ENCODE measurements at regions of chr2 and their contacts with region 1.

Region 1: DNA sequence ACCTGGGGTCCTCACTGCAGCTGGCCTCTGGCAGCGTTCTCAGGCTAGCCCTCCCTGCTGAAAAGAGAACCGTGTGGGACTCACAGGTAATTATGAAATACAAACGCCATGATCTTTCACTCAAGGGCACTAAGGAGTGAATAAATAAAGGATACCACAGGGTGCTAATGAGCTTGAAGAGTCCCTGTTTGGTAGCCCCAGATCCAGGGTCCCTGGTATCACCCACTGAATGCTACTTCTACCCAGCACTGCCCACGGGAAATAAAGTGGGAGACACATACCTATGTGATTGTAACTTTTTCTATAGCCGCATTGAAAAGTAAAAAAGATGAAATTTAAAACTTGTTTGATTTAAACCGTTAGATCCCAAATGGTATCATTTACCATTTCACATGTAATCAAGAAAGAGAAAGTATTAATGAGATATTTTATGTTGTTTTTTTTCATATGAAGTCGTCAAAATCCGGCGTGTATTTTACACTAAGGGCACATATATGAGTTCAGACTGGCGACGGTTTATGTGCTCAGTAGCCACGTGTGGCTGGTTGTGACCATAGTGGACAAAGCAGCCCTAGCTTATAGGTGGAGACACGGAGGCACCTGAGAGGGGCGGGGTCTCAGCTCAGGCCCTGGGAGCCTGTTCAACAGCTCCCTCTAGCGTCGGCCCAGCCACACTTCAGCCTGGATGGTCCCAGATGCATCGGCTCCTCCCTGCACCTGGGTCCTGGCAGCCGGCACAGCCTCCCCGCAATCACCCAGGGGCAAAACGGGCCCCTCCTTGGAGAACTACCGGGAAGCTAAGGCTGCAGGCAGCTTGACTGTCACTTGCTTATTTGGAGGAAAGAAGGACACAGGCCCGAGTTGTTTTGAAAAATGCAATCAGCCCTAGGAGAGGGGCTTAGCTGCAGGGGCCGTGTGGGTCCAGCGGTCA is 39.2 kb downstream of the ODC1 start:
- DNase-seq: peak; percentile 93 to 94
- ATAC-seq: peak; percentile 58 to 80
- H3K4me3 ChIP-seq: peak overlapping the region; percentile 13; the same call in 2 of the 3 replicates
- H3K27ac ChIP-seq: peak overlapping the region; percentile 93 to 95
- H3K4me1 ChIP-seq: peaks cover 63% of the 10 kb centered on the region
- CTCF ChIP-seq: peak; percentile 99
- EP300 ChIP-seq: no peak; a peak in 1 of 5 replicates
- POLR2A ChIP-seq: no peak
- RAD21 ChIP-seq: peak; percentile 99

Region 2: DNA sequence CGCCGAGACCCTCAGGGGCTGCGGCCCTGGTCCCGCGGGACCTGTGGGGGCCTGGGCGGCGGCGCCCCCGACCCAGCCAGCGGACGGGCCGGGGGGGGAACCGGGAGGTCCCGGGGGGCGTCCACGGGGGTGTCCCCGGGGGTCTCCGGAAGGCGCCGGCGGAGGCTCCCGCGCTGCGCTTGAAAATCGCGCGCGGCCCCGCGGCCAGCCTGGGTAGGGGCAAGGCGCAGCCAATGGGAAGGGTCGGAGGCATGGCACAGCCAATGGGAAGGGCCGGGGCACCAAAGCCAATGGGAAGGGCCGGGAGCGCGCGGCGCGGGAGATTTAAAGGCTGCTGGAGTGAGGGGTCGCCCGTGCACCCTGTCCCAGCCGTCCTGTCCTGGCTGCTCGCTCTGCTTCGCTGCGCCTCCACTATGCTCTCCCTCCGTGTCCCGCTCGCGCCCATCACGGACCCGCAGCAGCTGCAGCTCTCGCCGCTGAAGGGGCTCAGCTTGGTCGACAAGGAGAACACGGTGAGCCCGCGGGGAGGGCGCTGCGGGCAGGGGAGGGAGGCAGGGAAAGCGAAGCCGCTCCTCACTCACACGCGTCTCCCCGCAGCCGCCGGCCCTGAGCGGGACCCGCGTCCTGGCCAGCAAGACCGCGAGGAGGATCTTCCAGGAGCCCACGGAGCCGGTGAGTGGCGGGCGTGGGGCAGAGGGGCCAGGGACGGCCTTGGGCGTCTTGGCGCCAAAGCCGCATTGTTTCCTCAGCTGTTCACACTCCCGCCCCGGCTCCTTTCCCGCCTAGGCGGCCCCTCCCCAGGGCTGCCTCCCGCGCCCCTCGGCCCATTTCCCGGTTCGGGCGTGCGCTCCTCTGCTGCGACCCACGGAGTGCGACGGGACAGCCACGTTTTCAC is 286.3 kb before region 1 on chr2 and contains the start of gene RRM2:
- CTCF ChIA-PET with region 1: interaction called, 374 read pairs
- POLR2A ChIA-PET with region 1: interaction called, 5 read pairs
- DNase-seq: peak; percentile 97
- ATAC-seq: peak; percentile 73 to 88
- H3K4me3 ChIP-seq: peak within 1 kb of the TSS; percentile 76
- H3K27ac ChIP-seq: peak within 1 kb of the TSS; percentile 88 to 95
- H3K4me1 ChIP-seq: peaks cover 30% of the 10 kb centered on the region
- CTCF ChIP-seq: no peak
- EP300 ChIP-seq: no peak
- POLR2A ChIP-seq: peak; percentile 91
- RAD21 ChIP-seq: no peak
- polyA plus RNA-seq, gene RRM2: 65.1 and 84.4 TPM in 2 replicates

Region 3: DNA sequence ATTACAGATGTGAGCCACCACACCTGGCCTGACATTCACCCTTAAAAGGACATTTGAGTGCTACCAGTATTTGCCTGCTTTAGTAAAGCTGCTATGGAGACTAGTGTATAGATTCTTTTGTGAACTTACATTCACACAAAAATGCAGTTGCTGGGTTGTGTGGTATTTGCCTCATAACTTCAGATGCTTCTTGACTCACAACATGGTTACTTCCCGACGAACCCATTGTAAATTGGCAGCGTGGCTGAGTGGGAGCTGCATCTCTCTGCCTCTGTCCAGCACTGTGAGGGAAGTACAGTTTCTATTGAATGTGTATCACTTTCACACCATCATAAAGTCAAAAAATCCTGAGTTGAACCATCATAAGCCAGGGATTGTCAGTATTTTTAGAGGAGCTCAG is 229.5 kb before region 1 on chr2:
- CTCF ChIA-PET with region 1: interaction called, 11 read pairs
- POLR2A ChIA-PET with region 1: no interaction called
- DNase-seq: no peak
- ATAC-seq: no peak
- H3K4me3 ChIP-seq: no peak overlapping the region
- H3K27ac ChIP-seq: no peak overlapping the region
- H3K4me1 ChIP-seq: no peaks in the 10 kb centered on the region
- CTCF ChIP-seq: no peak
- EP300 ChIP-seq: no peak
- POLR2A ChIP-seq: no peak
- RAD21 ChIP-seq: no peak

Region 4: GRCh38 chr2:10278029-10278762 is 130.7 kb before region 1 on chr2:
- CTCF ChIA-PET with region 1: interaction called, 86 read pairs
- POLR2A ChIA-PET with region 1: no interaction called
- DNase-seq: no peak
- ATAC-seq: peak in 1 of 2 experiments; percentile 48; a peak in 1 of 6 replicates
- H3K4me3 ChIP-seq: no peak overlapping the region
- H3K27ac ChIP-seq: peak overlapping the region; percentile 66 to 77; a peak in 5 of 6 replicates
- H3K4me1 ChIP-seq: peaks cover 25% of the 10 kb centered on the region
- CTCF ChIP-seq: no peak
- EP300 ChIP-seq: no peak
- POLR2A ChIP-seq: no peak
- RAD21 ChIP-seq: no peak

Region 5: GRCh38 chr2:10331027-10331701 is 77.8 kb before region 1 on chr2:
- CTCF ChIA-PET with region 1: interaction called, 61 read pairs
- POLR2A ChIA-PET with region 1: interaction called, 7 read pairs
- DNase-seq: peak; percentile 36 to 81
- ATAC-seq: peak; percentile 58 to 78
- H3K4me3 ChIP-seq: peak overlapping the region; percentile 25; the same call in 2 of the 3 replicates
- H3K27ac ChIP-seq: peak overlapping the region; percentile 89 to 92
- H3K4me1 ChIP-seq: peaks cover 84% of the 10 kb centered on the region
- CTCF ChIP-seq: no peak
- EP300 ChIP-seq: no peak
- POLR2A ChIP-seq: no peak
- RAD21 ChIP-seq: peak in 1 of 2 experiments; percentile 36; a peak in 3 of 5 replicates

Region 6: GRCh38 chr2:10385933-10386773 is 22.8 kb before region 1 on chr2:
- CTCF ChIA-PET with region 1: interaction called, 44 read pairs
- POLR2A ChIA-PET with region 1: interaction called, 3 read pairs
- DNase-seq: peak; percentile 70 to 87
- ATAC-seq: peak; percentile 63 to 79
- H3K4me3 ChIP-seq: 0 out of 3 replicates have a peak overlapping the region, but pooled peaks have one; percentile 1
- H3K27ac ChIP-seq: peak overlapping the region; percentile 89
- H3K4me1 ChIP-seq: peaks cover 100% of the 10 kb centered on the region
- CTCF ChIP-seq: no peak
- EP300 ChIP-seq: peak in 1 of 2 experiments; percentile 47; a peak in 1 of 5 replicates
- POLR2A ChIP-seq: no peak
- RAD21 ChIP-seq: no peak; a peak in 2 of 5 replicates

Measured in A549 (cell line).